Motor neuron (in vitro differentiated cells): ENCODE measurements at regions of chr9 and their contacts with region 1.

Region 1: GRCh38 chr9:124839612-124840299 is 13.5 kb upstream of the WDR38 start:
- ATAC-seq: peak in 7 of 8 experiments; percentile 30 to 64 (median 35)
- H3K4me3 ChIP-seq: no peak overlapping the region
- H3K27ac ChIP-seq: no peak overlapping the region
- H3K4me1 ChIP-seq: peaks cover 0 to 4% of the 10 kb centered on the region in 2 donors

Region 2: GRCh38 chr9:124645274-124645673 is 194.5 kb before region 1 on chr9:
- in situ Hi-C with region 1: no loop called
- ATAC-seq: no peak
- H3K4me3 ChIP-seq: no peak overlapping the region
- H3K27ac ChIP-seq: no peak overlapping the region
- H3K4me1 ChIP-seq: no peaks in the 10 kb centered on the region

Region 3: DNA sequence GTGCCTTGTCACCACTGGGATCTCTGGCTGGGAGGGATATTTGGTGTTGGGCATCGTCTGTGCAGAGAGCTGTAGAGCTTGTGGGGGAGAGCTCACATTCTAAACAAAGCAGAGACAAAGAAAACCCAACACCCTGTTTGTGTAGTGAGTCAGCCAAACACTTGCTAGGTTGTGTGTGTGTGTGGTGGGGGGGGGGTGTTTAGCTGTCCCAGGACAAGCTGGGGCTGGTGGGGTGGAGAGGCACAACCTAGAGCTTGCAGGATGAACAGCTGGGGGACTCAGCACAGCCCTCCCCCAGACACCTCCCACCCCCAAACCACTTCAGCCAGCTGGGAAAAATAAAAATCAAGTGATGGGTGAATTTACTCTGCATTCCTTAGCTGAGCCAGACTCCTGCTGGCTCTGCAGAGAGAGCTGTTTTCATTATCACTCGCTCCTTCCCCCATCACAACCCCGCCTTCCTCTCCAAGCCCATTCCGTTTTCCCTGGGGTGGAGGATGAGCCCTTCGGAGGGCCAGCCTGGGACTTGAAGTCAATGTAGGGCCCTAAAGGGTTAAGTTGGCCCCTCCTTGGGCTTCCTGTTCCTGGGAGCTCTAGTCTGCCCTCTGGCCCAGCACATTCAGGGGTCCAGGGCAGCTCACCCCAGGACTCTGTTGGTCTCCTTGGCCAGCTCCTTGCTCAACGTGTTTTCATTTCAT is 60.2 kb before region 1 on chr9:
- in situ Hi-C with region 1: loop called in 3 of 9 experiments (anchors 10 kb)
- ATAC-seq: peak; percentile 14 to 69 (median 51)
- H3K4me3 ChIP-seq: no peak overlapping the region
- H3K27ac ChIP-seq: no peak overlapping the region
- H3K4me1 ChIP-seq: peaks cover 3 to 13% of the 10 kb centered on the region in 2 donors